Psoas muscle (tissue), 8 donors: ENCODE measurements at regions of chr3 and their contacts with region 1.

Region 1: GRCh38 chr3:106457286-106458180 is 588.7 kb upstream of the CBLB start:
- DNase-seq: peak; percentile 57 to 78
- ATAC-seq: peak; percentile 97 to 100 (median 98)
- H3K4me3 ChIP-seq: no peak overlapping the region
- H3K27ac ChIP-seq: peak overlapping the region; percentile 76
- H3K4me1 ChIP-seq: peaks cover 27% of the 10 kb centered on the region
- H3K27me3 ChIP-seq: no peaks in the 10 kb centered on the region
- CTCF ChIP-seq: no peak

Region 2: GRCh38 chr3:106013971-106014370 is 443.6 kb before region 1 on chr3:
- intact Hi-C with region 1: no loop called
- DNase-seq: no peak
- ATAC-seq: peak in 2 of 4 donors; percentile 40 to 54
- H3K4me3 ChIP-seq: no peak overlapping the region
- H3K27ac ChIP-seq: no peak overlapping the region
- H3K4me1 ChIP-seq: no peaks in the 10 kb centered on the region
- H3K27me3 ChIP-seq: no peaks in the 10 kb centered on the region
- CTCF ChIP-seq: no peak

Region 3: GRCh38 chr3:106345353-106346027 is 112.0 kb before region 1 on chr3:
- intact Hi-C with region 1: loop called in 1 of 2 experiments (anchors 5 kb)
- DNase-seq: no peak
- ATAC-seq: peak; percentile 85 to 95 (median 86)
- H3K4me3 ChIP-seq: no peak overlapping the region
- H3K27ac ChIP-seq: peak overlapping the region; percentile 85
- H3K4me1 ChIP-seq: peaks cover 52% of the 10 kb centered on the region
- H3K27me3 ChIP-seq: no peaks in the 10 kb centered on the region
- CTCF ChIP-seq: no peak

Region 4: GRCh38 chr3:106862067-106862466 is 404.5 kb after region 1 on chr3:
- intact Hi-C with region 1: no loop called
- DNase-seq: no peak
- ATAC-seq: no peak
- H3K4me3 ChIP-seq: no peak overlapping the region
- H3K27ac ChIP-seq: no peak overlapping the region
- H3K4me1 ChIP-seq: no peaks in the 10 kb centered on the region
- H3K27me3 ChIP-seq: no peaks in the 10 kb centered on the region
- CTCF ChIP-seq: no peak